ENCODE measurements at regions of chrX and their contacts with region 1.

Region 1: GRCh38 chrX:41558531-41558930 is 111.4 kb downstream of the NYX start:
- H3K4me3 Mint-ChIP-seq: no peak overlapping the region
- H3K27ac Mint-ChIP-seq: peak overlapping the region; percentile 76
- H3K4me1 Mint-ChIP-seq: peaks cover 5% of the 10 kb centered on the region
- H3K27me3 Mint-ChIP-seq: no peaks in the 10 kb centered on the region

Region 2: GRCh38 chrX:41481264-41482109 is 77.0 kb before region 1 on chrX:
- intact Hi-C with region 1: no loop called
- H3K4me3 Mint-ChIP-seq: no peak overlapping the region
- H3K27ac Mint-ChIP-seq: no peak overlapping the region
- H3K4me1 Mint-ChIP-seq: peaks cover 5% of the 10 kb centered on the region
- H3K27me3 Mint-ChIP-seq: peaks cover 2% of the 10 kb centered on the region

Region 3: GRCh38 chrX:41705680-41706374 is 147.3 kb after region 1 on chrX:
- intact Hi-C with region 1: loop called (anchors 5 kb)
- H3K4me3 Mint-ChIP-seq: peak overlapping the region; percentile 37
- H3K27ac Mint-ChIP-seq: peak overlapping the region; percentile 90
- H3K4me1 Mint-ChIP-seq: peaks cover 35% of the 10 kb centered on the region
- H3K27me3 Mint-ChIP-seq: no peaks in the 10 kb centered on the region

Region 4: DNA sequence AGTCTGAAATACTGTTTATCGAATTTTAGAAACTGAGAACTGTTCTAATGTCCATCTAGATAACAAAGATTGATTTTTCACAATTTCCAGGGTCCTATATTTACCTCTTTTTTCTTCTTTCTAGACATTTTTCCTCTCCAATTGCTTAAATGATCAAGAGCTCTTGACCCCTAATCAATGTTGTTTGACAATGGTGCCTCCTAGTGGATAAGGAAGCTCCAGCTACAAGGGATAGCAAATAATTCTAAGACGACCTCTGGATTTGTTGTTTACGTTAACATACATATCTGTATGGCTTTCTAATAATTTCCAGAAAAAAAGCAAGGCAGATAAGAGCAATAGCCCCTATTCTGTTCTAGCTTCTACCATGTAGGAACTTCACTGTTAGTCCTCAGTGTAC is 201.3 kb after region 1 on chrX:
- intact Hi-C with region 1: loop called (anchors 1 kb)
- H3K4me3 Mint-ChIP-seq: no peak overlapping the region
- H3K27ac Mint-ChIP-seq: no peak overlapping the region
- H3K4me1 Mint-ChIP-seq: no peaks in the 10 kb centered on the region
- H3K27me3 Mint-ChIP-seq: no peaks in the 10 kb centered on the region

Region 5: GRCh38 chrX:41963348-41963747 is 404.8 kb after region 1 on chrX:
- intact Hi-C with region 1: no loop called
- H3K4me3 Mint-ChIP-seq: no peak overlapping the region
- H3K27ac Mint-ChIP-seq: no peak overlapping the region
- H3K4me1 Mint-ChIP-seq: no peaks in the 10 kb centered on the region
- H3K27me3 Mint-ChIP-seq: peaks cover 2% of the 10 kb centered on the region

Measured in dendritic cell treated with granulocyte-macrophage colony-stimulating factor and Interleukin-4, amounts not matched to agents 40 ng/mL and 50 ng/mL, for 4 days (primary cell).